HEK293 (cell line): ENCODE measurements at regions of chr9 and their contacts with region 1.

Region 1: DNA sequence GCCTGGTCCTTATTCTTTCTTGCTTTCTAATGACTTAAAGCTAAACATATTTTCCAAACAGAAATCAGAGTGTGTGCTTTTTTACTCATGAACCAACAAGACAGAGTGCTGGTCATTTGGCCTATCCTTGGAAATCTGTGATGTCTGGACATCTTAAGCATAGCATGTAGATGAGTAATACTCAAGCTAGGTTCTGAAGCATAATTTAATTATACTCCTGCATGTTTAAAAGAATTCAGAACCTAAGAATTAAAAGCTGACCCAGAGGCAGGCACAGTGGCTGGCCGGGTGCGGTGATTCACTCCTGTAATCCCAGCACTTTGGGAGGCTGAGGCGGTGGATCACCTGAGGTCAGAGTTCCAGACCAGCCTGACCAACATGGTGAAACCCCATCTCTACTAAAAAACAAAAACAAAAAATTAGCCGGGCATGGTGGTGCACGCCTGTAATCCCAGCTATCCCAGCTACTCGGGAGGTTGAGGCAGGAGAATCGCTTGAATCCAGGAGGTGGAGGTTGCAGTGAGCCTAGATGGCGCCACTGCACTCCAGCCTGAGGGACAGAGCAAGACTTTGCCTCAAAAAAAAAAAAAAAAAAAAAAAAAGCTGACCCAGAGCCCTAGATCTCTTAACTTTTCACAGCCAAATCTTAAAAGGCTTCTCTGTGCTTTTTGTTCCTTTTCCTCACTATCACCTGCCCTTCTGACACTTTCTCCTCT is 16.2 kb upstream of the TJP2 start:
- H3K4me3 ChIP-seq: no peak overlapping the region
- H3K27ac ChIP-seq: no peak overlapping the region
- H3K4me1 ChIP-seq: no peaks in the 10 kb centered on the region
- CTCF ChIP-seq: no peak

Region 2: DNA sequence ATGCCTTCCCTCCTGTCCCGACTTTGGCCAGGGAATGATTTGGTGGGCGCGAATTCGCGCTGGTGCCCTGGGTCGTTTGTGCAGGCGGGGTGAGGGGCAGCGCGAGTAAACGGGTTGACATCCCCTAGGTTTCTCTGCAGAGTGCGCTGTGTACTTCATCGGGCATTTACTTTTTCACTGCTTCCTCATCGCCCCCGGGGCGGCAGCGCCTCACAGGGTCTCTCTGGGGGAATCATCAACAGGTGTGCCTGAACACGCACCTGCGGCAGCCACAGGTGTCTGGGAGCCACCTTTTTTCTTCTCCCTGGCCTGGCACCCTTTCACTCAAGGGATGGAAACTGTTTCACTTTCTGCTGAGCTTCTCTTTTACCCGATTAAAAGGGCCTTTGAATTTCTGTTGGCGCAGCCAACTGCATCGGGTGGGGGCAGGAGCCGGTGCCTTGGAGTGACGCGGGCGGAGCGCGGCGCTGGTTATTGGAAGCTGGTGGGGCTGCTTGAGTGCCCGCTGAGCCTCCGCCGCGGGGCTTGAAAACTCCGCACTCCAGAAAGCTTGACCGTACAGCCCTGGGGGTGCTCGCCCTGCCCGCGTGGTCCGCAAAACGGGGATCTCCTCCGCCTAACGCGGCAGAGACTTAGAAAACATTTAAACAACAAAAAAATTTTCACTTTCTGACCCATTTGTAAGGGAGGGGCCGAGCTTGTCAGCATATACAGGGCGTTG is 35.9 kb before region 1 on chr9:
- CTCF ChIA-PET with region 1: interaction called, 10 read pairs
- POLR2A ChIA-PET with region 1: no interaction called
- H3K4me3 ChIP-seq: peak overlapping the region; percentile 83
- H3K27ac ChIP-seq: peak overlapping the region; percentile 90
- H3K4me1 ChIP-seq: peaks cover 3% of the 10 kb centered on the region; the same call in 1 of the 2 replicates
- CTCF ChIP-seq: peak; percentile 12; the same call in 1 of the 2 replicates

Region 3: DNA sequence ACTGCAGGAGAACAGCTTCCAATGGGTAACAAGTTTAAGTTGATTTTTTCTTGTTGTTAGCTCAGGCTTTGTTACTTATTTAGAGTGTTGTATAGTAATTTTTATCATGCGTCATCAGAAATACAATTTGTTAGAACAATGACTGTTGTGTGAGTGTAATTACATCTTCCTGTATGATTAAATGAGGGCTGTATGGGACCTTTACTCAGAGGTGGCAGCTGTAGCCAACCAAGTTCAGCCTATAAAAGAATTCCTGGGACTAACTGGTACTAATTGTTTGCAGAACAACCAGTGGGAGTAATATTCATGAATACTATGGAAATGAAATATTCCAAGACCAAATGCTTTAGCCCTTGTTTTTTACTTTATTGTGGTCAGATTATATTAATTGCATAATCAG is 14.6 kb before region 1 on chr9:
- CTCF ChIA-PET with region 1: interaction called, 15 read pairs
- POLR2A ChIA-PET with region 1: no interaction called
- H3K4me3 ChIP-seq: no peak overlapping the region
- H3K27ac ChIP-seq: no peak overlapping the region
- H3K4me1 ChIP-seq: no peaks in the 10 kb centered on the region
- CTCF ChIP-seq: no peak

Region 4: GRCh38 chr9:69168709-69169217 is 10.9 kb after region 1 on chr9:
- CTCF ChIA-PET with region 1: interaction called, 16 read pairs
- POLR2A ChIA-PET with region 1: interaction called, 5 read pairs
- H3K4me3 ChIP-seq: no peak overlapping the region
- H3K27ac ChIP-seq: no peak overlapping the region
- H3K4me1 ChIP-seq: peaks cover 10% of the 10 kb centered on the region; the same call in 1 of the 2 replicates
- CTCF ChIP-seq: no peak

Region 5: DNA sequence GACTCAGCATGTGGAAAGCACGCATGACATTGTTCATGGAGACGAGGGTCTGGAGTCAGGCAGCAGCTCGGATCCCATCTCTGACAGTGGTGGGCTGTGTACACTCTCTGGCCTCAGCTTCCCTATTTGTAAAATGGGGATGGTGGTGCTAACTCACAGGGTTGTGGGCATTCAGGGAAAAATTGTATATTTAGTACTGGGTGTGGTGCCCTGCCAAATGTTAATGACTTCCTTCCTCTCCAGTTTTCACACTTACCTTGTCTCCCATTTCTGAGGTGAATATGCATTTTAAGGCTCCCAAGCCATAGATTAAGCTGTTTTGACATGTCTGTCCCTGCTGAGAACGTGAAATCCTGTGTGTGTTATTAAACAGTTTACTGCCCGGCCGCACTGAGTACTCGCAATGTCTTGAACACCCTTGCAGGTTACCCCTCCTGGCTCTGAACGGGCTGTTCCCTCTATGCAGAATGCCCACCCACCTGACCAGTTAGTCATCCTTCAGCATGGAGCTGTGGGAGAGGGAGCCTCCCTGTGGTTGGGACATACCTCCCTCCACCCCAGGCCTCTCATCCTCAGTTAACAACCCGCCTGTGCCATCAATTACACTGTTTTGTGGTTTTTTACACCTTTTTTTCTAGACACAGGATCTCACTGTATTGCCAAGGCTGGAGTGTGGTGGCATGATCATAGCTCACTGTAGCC is 42.0 kb after region 1 on chr9:
- CTCF ChIA-PET with region 1: interaction called, 10 read pairs
- POLR2A ChIA-PET with region 1: no interaction called
- H3K4me3 ChIP-seq: no peak overlapping the region
- H3K27ac ChIP-seq: no peak overlapping the region
- H3K4me1 ChIP-seq: no peaks in the 10 kb centered on the region; the same call in 1 of the 2 replicates
- CTCF ChIP-seq: no peak

Region 6: DNA sequence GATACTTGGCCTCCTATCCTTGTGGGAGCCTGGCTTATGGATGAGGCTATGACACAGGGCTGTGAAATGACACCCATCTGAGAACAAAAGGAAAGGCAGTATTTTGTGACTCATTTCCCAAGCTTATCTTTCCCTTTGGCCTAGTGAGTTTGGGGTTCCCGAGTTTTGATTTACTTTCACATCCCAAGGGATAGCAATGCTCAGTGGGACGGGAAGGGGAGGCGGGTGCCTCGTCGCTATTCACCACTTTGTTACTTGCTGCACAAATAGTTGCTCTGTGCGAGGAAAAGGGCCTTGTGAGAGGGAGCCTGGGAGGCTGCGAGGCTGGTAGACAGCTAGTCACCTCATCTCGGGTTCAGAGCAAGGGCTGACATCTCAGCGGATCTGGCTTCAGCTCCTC is 108.0 kb after region 1 on chr9:
- CTCF ChIA-PET with region 1: no interaction called
- POLR2A ChIA-PET with region 1: no interaction called
- H3K4me3 ChIP-seq: no peak overlapping the region
- H3K27ac ChIP-seq: no peak overlapping the region
- H3K4me1 ChIP-seq: no peaks in the 10 kb centered on the region
- CTCF ChIP-seq: no peak